Natural killer cell (primary cell): ENCODE measurements at regions of chr5 and their contacts with region 1.

Region 1: GRCh38 chr5:178626484-178627258 is at the start of gene CLK4:
- DNase-seq: peak; percentile 98
- ATAC-seq: peak; percentile 88 to 98 (median 91)
- H3K4me3 ChIP-seq: peak within 1 kb of the TSS; percentile 71
- H3K4me3 Mint-ChIP-seq: peak within 1 kb of the TSS; percentile 99
- H3K27ac ChIP-seq: peak within 1 kb of the TSS; percentile 99
- H3K27ac Mint-ChIP-seq: peak within 1 kb of the TSS; percentile 98 to 100
- H3K4me1 ChIP-seq: peaks cover 15% of the 10 kb centered on the region
- H3K4me1 Mint-ChIP-seq: peaks cover 38 to 39% of the 10 kb centered on the region in 2 donors
- H3K27me3 ChIP-seq: no peaks in the 10 kb centered on the region
- H3K27me3 Mint-ChIP-seq: no peaks in the 10 kb centered on the region
- CTCF ChIP-seq: no peak
- total RNA-seq, gene CLK4: 71.2 to 81.8 (median 78.0) TPM

Region 2: GRCh38 chr5:178642351-178642971 is 15.8 kb after region 1 on chr5:
- intact Hi-C with region 1: no loop called
- DNase-seq: no peak
- ATAC-seq: no peak
- H3K4me3 ChIP-seq: no peak overlapping the region
- H3K4me3 Mint-ChIP-seq: no peak overlapping the region
- H3K27ac ChIP-seq: no peak overlapping the region
- H3K27ac Mint-ChIP-seq: no peak overlapping the region
- H3K4me1 ChIP-seq: no peaks in the 10 kb centered on the region
- H3K4me1 Mint-ChIP-seq: peaks cover 0 to 10% of the 10 kb centered on the region in 2 donors
- H3K27me3 ChIP-seq: no peaks in the 10 kb centered on the region
- H3K27me3 Mint-ChIP-seq: peaks cover 4 to 9% of the 10 kb centered on the region in 2 donors
- CTCF ChIP-seq: no peak

Region 3: GRCh38 chr5:179023528-179024430 is 397.1 kb after region 1 on chr5 and contains the start of gene ZNF879:
- intact Hi-C with region 1: loop called (anchors 5 kb)
- DNase-seq: peak; percentile 91 to 97
- ATAC-seq: peak; percentile 93 to 95 (median 94)
- H3K4me3 ChIP-seq: peak within 1 kb of the TSS; percentile 65
- H3K4me3 Mint-ChIP-seq: peak within 1 kb of the TSS; percentile 97
- H3K27ac ChIP-seq: peak within 1 kb of the TSS; percentile 47
- H3K27ac Mint-ChIP-seq: peak within 1 kb of the TSS; percentile 83 to 88
- H3K4me1 ChIP-seq: peaks cover 17% of the 10 kb centered on the region
- H3K4me1 Mint-ChIP-seq: peaks cover 13 to 16% of the 10 kb centered on the region in 2 donors
- H3K27me3 ChIP-seq: no peaks in the 10 kb centered on the region
- H3K27me3 Mint-ChIP-seq: peaks cover 0 to 12% of the 10 kb centered on the region in 2 donors
- CTCF ChIP-seq: no peak
- total RNA-seq, gene ZNF879: 4.2 to 7.6 (median 5.1) TPM

Region 4: DNA sequence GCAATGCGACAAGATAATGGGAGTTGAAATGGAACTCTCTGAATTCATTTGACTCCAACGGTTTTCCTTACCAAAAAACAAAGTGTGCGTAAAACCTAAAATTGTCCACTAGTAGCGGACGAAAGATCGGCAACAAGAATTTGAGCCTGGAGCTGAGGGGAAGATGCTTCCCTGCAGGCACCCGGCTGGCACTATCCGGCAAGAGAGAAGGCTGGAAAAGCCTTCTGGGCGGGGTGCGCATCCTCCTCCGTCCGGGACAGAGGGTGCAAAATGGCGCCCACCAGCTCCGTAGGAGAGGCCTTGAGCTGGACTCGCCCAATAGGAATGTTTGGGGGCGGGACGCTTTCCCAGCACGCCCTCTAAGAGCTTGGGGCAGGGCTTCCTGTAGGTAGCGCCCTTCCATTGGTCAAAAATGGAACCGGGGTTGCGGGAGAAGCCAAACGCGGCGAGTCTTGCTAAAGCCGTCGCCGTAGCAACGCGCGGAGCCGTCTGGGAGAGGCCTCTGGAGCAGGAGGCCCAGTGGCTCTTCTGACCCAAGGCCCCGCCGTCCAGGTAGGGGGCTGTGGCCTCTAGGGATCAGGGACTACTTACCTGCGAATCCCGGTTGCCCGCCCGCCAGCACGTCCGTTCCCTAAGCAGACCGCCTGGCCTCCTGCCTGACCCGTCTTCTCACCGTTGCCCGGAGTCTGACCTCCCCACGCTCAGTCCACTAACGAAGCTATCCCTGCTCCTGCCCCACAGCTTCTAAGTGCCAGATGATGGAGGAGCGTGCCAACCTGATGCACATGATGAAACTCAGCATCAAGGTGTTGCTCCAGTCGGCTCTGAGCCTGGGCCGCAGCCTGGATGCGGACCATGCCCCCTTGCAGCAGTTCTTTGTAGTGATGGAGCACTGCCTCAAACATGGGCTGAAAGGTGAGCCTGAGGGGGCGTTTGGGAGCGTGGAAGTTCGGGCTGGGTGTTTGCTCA is 932.9 kb after region 1 on chr5:
- intact Hi-C with region 1: loop called (anchors 10 kb)
- DNase-seq: peak; percentile 86 to 94
- ATAC-seq: peak; percentile 99 to 100 (median 100)
- H3K4me3 ChIP-seq: peak overlapping the region; percentile 55
- H3K4me3 Mint-ChIP-seq: peak overlapping the region; percentile 96
- H3K27ac ChIP-seq: peak overlapping the region; percentile 61
- H3K27ac Mint-ChIP-seq: peak overlapping the region; percentile 89 to 95
- H3K4me1 ChIP-seq: peaks cover 9% of the 10 kb centered on the region
- H3K4me1 Mint-ChIP-seq: peaks cover 11% of the 10 kb centered on the region in 2 donors
- H3K27me3 ChIP-seq: no peaks in the 10 kb centered on the region
- H3K27me3 Mint-ChIP-seq: no peaks in the 10 kb centered on the region
- CTCF ChIP-seq: no peak